Mammary epithelial cell (primary cell): ENCODE measurements at regions of chr7 and their contacts with region 1.

Region 1: GRCh38 chr7:123557398-123558288 is at the start of gene NDUFA5:
- DNase-seq: peak; percentile 98
- H3K4me3 ChIP-seq: peak within 1 kb of the TSS; percentile 61 to 99 (median 92)
- H3K27ac ChIP-seq: peak within 1 kb of the TSS; percentile 95
- H3K4me1 ChIP-seq: peaks cover 4% of the 10 kb centered on the region
- H3K27me3 ChIP-seq: no peaks in the 10 kb centered on the region
- CTCF ChIP-seq: no peak
- total RNA-seq, gene NDUFA5: 29.5 to 57.4 TPM

Region 2: DNA sequence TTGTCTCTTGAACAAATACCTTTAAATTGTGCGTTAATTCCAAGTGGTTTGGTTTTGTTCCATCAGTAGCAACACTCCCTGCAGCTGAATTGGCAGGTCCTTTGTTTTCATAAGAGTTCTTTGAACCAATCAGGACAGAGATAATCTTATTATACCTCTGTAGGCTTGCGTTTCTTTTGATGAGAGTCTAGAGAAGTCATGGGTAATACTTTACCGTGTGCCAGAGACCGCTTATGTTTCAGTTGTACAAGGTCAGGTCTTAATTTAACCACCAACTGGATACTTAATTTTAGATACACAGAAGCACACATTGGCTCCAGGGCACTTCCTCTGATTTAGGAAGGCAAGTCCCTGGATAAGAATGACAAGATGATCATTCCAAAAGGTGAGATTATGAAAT is 43.9 kb after region 1 on chr7 and contains the start of gene ASB15:
- CTCF ChIA-PET with region 1: no interaction called
- dilution Hi-C with region 1: no loop called
- in situ Hi-C with region 1: no loop called
- intact Hi-C with region 1: no loop called
- DNase-seq: no peak
- H3K4me3 ChIP-seq: no peak within 1 kb of the TSS
- H3K27ac ChIP-seq: no peak within 1 kb of the TSS
- H3K4me1 ChIP-seq: no peaks in the 10 kb centered on the region
- H3K27me3 ChIP-seq: no peaks in the 10 kb centered on the region
- CTCF ChIP-seq: no peak
- total RNA-seq, gene ASB15: not detected

Region 3: GRCh38 chr7:123995617-123996326 is 438.1 kb after region 1 on chr7:
- CTCF ChIA-PET with region 1: no interaction called
- dilution Hi-C with region 1: no loop called
- in situ Hi-C with region 1: no loop called
- intact Hi-C with region 1: loop called (anchors 5 kb)
- DNase-seq: no peak
- H3K4me3 ChIP-seq: no peak overlapping the region
- H3K27ac ChIP-seq: no peak overlapping the region
- H3K4me1 ChIP-seq: peaks cover 14% of the 10 kb centered on the region
- H3K27me3 ChIP-seq: peaks cover 2% of the 10 kb centered on the region
- CTCF ChIP-seq: no peak